CD8-positive, alpha-beta T cell (primary cell): ENCODE measurements at regions of chr17 and their contacts with region 1.

Region 1: DNA sequence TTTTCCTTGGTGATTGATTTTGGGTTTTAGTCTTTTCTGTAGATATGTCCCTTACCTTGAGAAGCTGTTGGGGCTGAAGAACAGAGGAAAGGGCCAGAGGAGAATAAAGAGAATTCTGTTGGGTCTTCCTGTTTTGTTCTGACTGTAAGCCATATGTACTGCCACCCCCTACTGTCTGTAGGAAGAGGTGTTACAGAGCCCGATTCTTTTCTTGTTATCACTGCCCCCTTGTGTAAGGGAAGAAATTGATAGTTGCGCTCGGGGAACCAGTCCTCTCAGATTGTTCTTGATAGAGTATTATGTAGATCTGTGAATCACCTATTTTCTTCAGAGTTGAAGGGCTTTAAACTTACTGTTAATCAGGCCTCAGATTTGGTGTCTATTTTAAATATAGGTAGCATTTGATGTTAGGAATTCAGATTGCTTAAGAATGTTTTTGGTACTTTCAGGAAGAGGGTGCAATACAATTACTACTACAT is 2.4 kb downstream of the TANC2 start:
- DNase-seq: peak in 8 of 9 experiments; percentile 6 to 87 (median 54)
- ATAC-seq: peak; percentile 39
- H3K4me3 ChIP-seq: no peak overlapping the region
- H3K4me3 Mint-ChIP-seq: peak overlapping the region; percentile 40
- H3K27ac ChIP-seq: no peak overlapping the region
- H3K27ac Mint-ChIP-seq: peak overlapping the region; percentile 3
- H3K4me1 ChIP-seq: peaks cover 23% of the 10 kb centered on the region
- H3K4me1 Mint-ChIP-seq: peaks cover 36% of the 10 kb centered on the region
- H3K27me3 ChIP-seq: no peaks in the 10 kb centered on the region
- H3K27me3 Mint-ChIP-seq: no peaks in the 10 kb centered on the region
- CTCF ChIP-seq: peak; percentile 93

Region 2: GRCh38 chr17:62671583-62672312 is 296.7 kb before region 1 on chr17:
- CTCF ChIA-PET with region 1: interaction called, 4 read pairs
- POLR2A ChIA-PET with region 1: no interaction called
- intact Hi-C with region 1: loop called (anchors 1 kb)
- DNase-seq: no peak
- ATAC-seq: no peak
- H3K4me3 ChIP-seq: no peak overlapping the region
- H3K4me3 Mint-ChIP-seq: no peak overlapping the region
- H3K27ac ChIP-seq: no peak overlapping the region
- H3K27ac Mint-ChIP-seq: no peak overlapping the region
- H3K4me1 ChIP-seq: peaks cover 5% of the 10 kb centered on the region
- H3K4me1 Mint-ChIP-seq: peaks cover 8% of the 10 kb centered on the region
- H3K27me3 ChIP-seq: no peaks in the 10 kb centered on the region
- H3K27me3 Mint-ChIP-seq: no peaks in the 10 kb centered on the region
- CTCF ChIP-seq: no peak

Region 3: GRCh38 chr17:62724398-62725146 is 243.9 kb before region 1 on chr17:
- CTCF ChIA-PET with region 1: interaction called, 6 read pairs
- POLR2A ChIA-PET with region 1: interaction called, 6 read pairs
- intact Hi-C with region 1: loop called in 1 of 2 experiments (anchors 5 kb)
- DNase-seq: peak; percentile 25 to 92 (median 65)
- ATAC-seq: peak; percentile 97
- H3K4me3 ChIP-seq: peak overlapping the region; percentile 11 to 23
- H3K4me3 Mint-ChIP-seq: peak overlapping the region; percentile 72
- H3K27ac ChIP-seq: peak overlapping the region; percentile 30 to 83
- H3K27ac Mint-ChIP-seq: peak overlapping the region; percentile 94
- H3K4me1 ChIP-seq: peaks cover 21% of the 10 kb centered on the region
- H3K4me1 Mint-ChIP-seq: peaks cover 24% of the 10 kb centered on the region
- H3K27me3 ChIP-seq: no peaks in the 10 kb centered on the region
- H3K27me3 Mint-ChIP-seq: no peaks in the 10 kb centered on the region
- CTCF ChIP-seq: no peak

Region 4: DNA sequence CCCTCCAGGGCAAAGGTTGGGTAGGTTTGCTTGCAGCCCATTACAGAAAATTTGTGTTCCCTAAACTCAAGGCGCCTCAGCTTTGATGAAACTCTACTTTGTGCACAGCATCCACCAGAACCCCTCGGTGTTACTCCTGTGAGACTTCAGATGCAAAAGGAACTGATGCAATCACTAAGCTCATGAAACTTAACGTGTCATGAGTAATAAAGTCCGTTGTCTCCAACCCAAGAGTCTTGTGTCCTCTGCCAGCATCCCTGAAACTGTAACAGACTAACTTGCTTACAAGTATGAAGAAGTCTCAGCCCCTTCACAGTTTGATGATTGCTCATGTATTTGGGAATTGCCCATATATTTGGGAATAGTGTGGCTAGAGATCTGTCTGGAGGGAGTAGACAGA is 85.6 kb before region 1 on chr17:
- CTCF ChIA-PET with region 1: no interaction called
- POLR2A ChIA-PET with region 1: no interaction called
- intact Hi-C with region 1: loop called in 1 of 2 experiments (anchors 5 kb)
- DNase-seq: no peak
- ATAC-seq: no peak
- H3K4me3 ChIP-seq: no peak overlapping the region
- H3K4me3 Mint-ChIP-seq: no peak overlapping the region
- H3K27ac ChIP-seq: no peak overlapping the region
- H3K27ac Mint-ChIP-seq: no peak overlapping the region
- H3K4me1 ChIP-seq: no peaks in the 10 kb centered on the region
- H3K4me1 Mint-ChIP-seq: no peaks in the 10 kb centered on the region
- H3K27me3 ChIP-seq: no peaks in the 10 kb centered on the region
- H3K27me3 Mint-ChIP-seq: peaks cover 23% of the 10 kb centered on the region
- CTCF ChIP-seq: no peak

Region 5: DNA sequence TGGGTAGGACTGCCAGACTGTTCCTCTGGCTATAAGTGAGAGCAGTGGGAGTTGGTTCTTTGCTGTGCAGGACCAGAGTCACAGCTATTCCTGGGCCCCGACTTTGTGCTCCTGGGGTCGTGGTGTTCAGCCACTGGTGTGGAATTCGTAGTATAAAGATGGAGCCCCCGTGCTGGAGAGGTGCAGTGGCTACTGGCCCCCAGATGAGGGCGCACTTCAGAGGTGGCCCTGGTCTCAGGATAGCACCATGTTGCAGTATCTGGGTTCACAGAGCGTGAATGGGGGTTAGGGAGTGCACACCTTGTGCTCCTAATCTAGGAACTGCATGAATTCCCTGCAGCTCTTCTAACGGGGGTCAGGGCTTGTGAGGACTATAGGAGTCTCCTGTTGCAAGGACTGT is 18.7 kb after region 1 on chr17:
- CTCF ChIA-PET with region 1: no interaction called
- POLR2A ChIA-PET with region 1: no interaction called
- intact Hi-C with region 1: no loop called
- DNase-seq: no peak
- ATAC-seq: no peak
- H3K4me3 ChIP-seq: no peak overlapping the region
- H3K4me3 Mint-ChIP-seq: no peak overlapping the region
- H3K27ac ChIP-seq: no peak overlapping the region
- H3K27ac Mint-ChIP-seq: no peak overlapping the region
- H3K4me1 ChIP-seq: no peaks in the 10 kb centered on the region
- H3K4me1 Mint-ChIP-seq: peaks cover 5% of the 10 kb centered on the region
- H3K27me3 ChIP-seq: no peaks in the 10 kb centered on the region
- H3K27me3 Mint-ChIP-seq: no peaks in the 10 kb centered on the region
- CTCF ChIP-seq: no peak

Region 6: GRCh38 chr17:63773381-63774140 is 805.1 kb after region 1 on chr17 and contains the start of gene CCDC47:
- CTCF ChIA-PET with region 1: no interaction called
- POLR2A ChIA-PET with region 1: no interaction called
- intact Hi-C with region 1: loop called in 1 of 2 experiments (anchors 5 kb)
- DNase-seq: peak; percentile 95 to 100 (median 97)
- ATAC-seq: peak; percentile 79
- H3K4me3 ChIP-seq: peak within 1 kb of the TSS; percentile 84 to 95
- H3K4me3 Mint-ChIP-seq: peak within 1 kb of the TSS; percentile 97
- H3K27ac ChIP-seq: peak within 1 kb of the TSS; percentile 86 to 97
- H3K27ac Mint-ChIP-seq: peak within 1 kb of the TSS; percentile 98
- H3K4me1 ChIP-seq: peaks cover 41% of the 10 kb centered on the region
- H3K4me1 Mint-ChIP-seq: peaks cover 60% of the 10 kb centered on the region
- H3K27me3 ChIP-seq: no peaks in the 10 kb centered on the region
- H3K27me3 Mint-ChIP-seq: no peaks in the 10 kb centered on the region
- CTCF ChIP-seq: no peak
- total RNA-seq, gene CCDC47: 33.1 to 34.6 TPM